AG04449 (cell line): ENCODE measurements at regions of chr11 and their contacts with region 1.

Region 1: DNA sequence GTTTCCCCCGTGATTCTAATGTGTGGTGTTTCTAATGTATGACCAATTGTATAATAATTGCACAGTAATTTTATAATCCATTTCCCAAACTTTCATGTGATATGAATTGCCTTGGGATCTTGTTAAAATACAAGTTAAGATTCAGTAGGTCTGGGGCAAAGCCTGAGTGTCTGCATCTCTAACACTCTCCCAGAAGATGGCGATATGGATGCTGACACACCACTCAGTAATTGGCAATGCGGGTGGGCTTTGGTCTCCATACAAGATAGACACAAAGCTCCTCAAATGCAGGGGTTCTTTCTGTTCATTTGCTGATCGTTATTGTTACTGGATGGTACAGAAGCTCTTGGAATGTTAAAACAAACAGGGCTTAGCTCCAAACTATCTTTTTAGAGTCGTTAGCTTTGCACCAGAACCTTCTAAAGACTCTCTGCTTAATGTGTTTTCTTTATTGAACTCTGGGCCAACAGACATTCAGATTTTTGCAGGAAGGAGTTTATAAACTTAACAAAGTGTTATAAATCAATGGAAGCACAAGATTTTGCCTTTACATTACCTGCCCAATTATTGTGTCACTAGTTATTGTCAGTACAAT is 45.4 kb upstream of the ANO3 start:
- DNase-seq: no peak
- H3K4me3 ChIP-seq: no peak overlapping the region
- CTCF ChIP-seq: peak; percentile 50

Region 2: GRCh38 chr11:26063915-26064314 is 222.7 kb before region 1 on chr11:
- CTCF ChIA-PET with region 1: no interaction called
- POLR2A ChIA-PET with region 1: no interaction called
- DNase-seq: no peak
- H3K4me3 ChIP-seq: no peak overlapping the region
- CTCF ChIP-seq: no peak

Region 3: DNA sequence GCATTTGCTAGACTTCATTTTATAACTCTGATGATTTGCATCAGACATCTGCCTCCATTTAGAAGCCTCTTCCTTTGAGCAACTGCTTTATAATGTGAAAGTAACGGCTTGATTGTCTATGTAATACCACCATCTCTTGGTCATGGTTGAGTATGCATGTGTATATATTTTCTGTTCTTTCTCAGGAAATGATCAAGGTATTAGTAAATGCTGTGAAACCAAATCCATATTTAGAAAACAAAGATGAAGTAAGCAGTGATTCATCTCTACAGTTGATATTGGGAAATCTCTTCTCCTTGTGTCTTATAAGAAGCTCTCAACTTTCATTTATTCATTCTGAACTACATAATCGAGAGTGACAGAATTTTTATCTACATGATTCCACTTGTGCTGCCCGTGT is 59.3 kb before region 1 on chr11:
- CTCF ChIA-PET with region 1: interaction called, 10 read pairs
- POLR2A ChIA-PET with region 1: no interaction called
- DNase-seq: peak; percentile 73
- H3K4me3 ChIP-seq: no peak overlapping the region; the same call in 1 of the 2 replicates
- CTCF ChIP-seq: peak; percentile 34

Region 4: GRCh38 chr11:26248661-26249060 is 37.9 kb before region 1 on chr11:
- CTCF ChIA-PET with region 1: interaction called, 15 read pairs
- POLR2A ChIA-PET with region 1: no interaction called
- DNase-seq: no peak
- H3K4me3 ChIP-seq: no peak overlapping the region
- CTCF ChIP-seq: no peak

Region 5: DNA sequence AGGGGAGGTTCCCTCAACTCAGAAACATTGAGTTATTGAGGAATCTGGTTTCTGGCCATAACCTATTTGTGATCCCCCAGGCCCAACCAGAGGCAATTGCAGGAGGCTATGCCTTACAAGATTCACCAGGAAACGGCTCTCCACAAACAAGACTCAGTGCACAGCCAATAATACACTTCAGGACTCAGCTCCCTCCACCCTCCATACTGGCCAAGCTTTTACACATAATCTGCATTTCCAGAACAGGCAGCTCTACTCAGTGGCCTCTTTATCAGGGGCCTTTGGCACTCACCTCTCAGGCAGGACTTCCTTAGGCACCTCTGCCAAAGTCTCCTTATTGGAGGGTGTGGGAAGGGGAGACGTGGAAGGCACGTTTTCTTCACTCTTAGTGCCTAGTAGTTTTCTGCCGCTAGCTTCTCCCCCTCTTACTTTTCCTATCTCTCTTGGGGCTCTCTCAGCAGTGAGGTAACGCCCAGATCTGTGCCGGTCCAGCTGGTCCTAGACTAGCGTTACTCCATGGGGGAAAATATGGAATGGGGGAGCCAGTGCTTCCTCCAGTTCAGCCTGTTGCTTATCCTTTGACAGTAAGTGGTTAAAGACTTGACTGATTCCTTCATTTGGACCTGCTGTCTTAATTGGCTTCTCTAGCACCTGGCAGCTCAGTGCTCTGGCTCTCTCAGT is 17.4 kb before region 1 on chr11:
- CTCF ChIA-PET with region 1: interaction called, 20 read pairs
- POLR2A ChIA-PET with region 1: no interaction called
- DNase-seq: no peak
- H3K4me3 ChIP-seq: no peak overlapping the region
- CTCF ChIP-seq: no peak

Region 6: GRCh38 chr11:26297189-26297975 is 10.8 kb after region 1 on chr11:
- CTCF ChIA-PET with region 1: interaction called, 23 read pairs
- POLR2A ChIA-PET with region 1: no interaction called
- DNase-seq: peak; percentile 41
- H3K4me3 ChIP-seq: no peak overlapping the region
- CTCF ChIP-seq: peak; percentile 60

Region 7: DNA sequence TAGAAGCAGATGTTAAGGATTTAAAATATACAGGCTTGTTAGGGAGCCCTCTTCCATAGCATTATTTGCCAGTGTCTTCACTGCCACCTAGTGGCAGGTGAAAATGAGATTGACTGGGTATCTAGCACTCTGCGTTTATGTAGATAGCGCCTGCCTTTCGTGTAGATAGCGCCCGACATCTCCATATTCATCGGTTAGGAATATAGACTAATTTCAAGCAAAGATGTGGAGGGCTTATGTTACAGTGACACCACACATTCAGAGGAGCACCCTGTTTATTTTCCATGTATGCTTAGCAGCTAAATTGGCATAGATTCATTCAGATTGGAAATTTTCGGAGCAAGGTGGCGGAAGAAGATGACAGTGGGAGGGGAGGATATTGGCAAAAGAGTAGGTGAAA is 363.3 kb after region 1 on chr11:
- CTCF ChIA-PET with region 1: interaction called, 10 read pairs
- POLR2A ChIA-PET with region 1: no interaction called
- DNase-seq: peak; percentile 29
- H3K4me3 ChIP-seq: no peak overlapping the region
- CTCF ChIP-seq: peak; percentile 68